B cell (primary cell): ENCODE measurements at regions of chr16 and their contacts with region 1.

Region 1: GRCh38 chr16:67490335-67491096 is 7.2 kb upstream of the AGRP start:
- DNase-seq: no peak
- ATAC-seq: no peak
- H3K4me3 ChIP-seq: no peak overlapping the region
- H3K4me3 Mint-ChIP-seq: peak overlapping the region; percentile 51
- H3K27ac ChIP-seq: peak overlapping the region; percentile 70 to 89
- H3K27ac Mint-ChIP-seq: peak overlapping the region; percentile 82
- H3K4me1 ChIP-seq: peaks cover 73 to 84% of the 10 kb centered on the region in 2 donors
- H3K4me1 Mint-ChIP-seq: peaks cover 71% of the 10 kb centered on the region
- H3K27me3 ChIP-seq: no peaks in the 10 kb centered on the region
- H3K27me3 Mint-ChIP-seq: no peaks in the 10 kb centered on the region
- CTCF ChIP-seq: no peak

Region 2: GRCh38 chr16:67537270-67537635 is 46.7 kb after region 1 on chr16:
- CTCF ChIA-PET with region 1: interaction called, 25 read pairs
- POLR2A ChIA-PET with region 1: interaction called, 4 read pairs
- intact Hi-C with region 1: no loop called
- DNase-seq: peak; percentile 71
- ATAC-seq: peak; percentile 44
- H3K4me3 ChIP-seq: peak overlapping the region; percentile 4 to 78 (median 69)
- H3K4me3 Mint-ChIP-seq: peak overlapping the region; percentile 91
- H3K27ac ChIP-seq: peak overlapping the region; percentile 91 to 97
- H3K27ac Mint-ChIP-seq: peak overlapping the region; percentile 95
- H3K4me1 ChIP-seq: peaks cover 63 to 79% of the 10 kb centered on the region in 2 donors
- H3K4me1 Mint-ChIP-seq: peaks cover 76% of the 10 kb centered on the region
- H3K27me3 ChIP-seq: no peaks in the 10 kb centered on the region
- H3K27me3 Mint-ChIP-seq: no peaks in the 10 kb centered on the region
- CTCF ChIP-seq: no peak